Esophagus squamous epithelium (tissue), 5 donors: ENCODE measurements at regions of chr11 and their contacts with region 1.

Region 1: GRCh38 chr11:33362051-33362910 is 105.1 kb downstream of the HIPK3 start:
- DNase-seq: no peak
- H3K4me3 ChIP-seq: no peak overlapping the region
- H3K27ac ChIP-seq: no peak overlapping the region
- H3K4me1 ChIP-seq: peaks cover 0 to 6% (median 0%) of the 10 kb centered on the region in 3 donors
- H3K27me3 ChIP-seq: no peaks in the 10 kb centered on the region
- CTCF ChIP-seq: peak in 5 of 6 experiments; percentile 58 to 80 (median 67)
- POLR2A ChIP-seq: no peak

Region 2: DNA sequence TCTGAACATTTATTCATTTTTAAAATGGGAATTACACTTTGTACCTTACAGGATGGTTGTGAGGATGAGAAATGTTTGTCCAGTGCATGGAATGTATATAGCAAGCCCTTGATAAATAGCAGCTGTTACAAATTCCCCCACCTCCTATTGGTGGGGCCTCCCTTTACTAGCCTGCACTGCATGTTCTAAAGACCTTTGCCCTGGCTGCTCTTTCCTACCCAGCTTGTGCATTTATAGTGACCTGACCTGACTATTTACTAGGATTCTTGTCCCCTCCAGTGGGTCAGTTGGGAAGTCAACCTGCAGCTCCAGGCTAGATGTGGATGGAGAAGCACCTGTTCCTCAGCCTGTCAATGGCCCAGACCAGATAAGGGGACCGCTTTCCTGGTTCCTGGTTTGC is 75.2 kb after region 1 on chr11:
- intact Hi-C with region 1: no loop called
- DNase-seq: no peak
- H3K4me3 ChIP-seq: no peak overlapping the region
- H3K27ac ChIP-seq: no peak overlapping the region
- H3K4me1 ChIP-seq: no peaks in the 10 kb centered on the region
- H3K27me3 ChIP-seq: no peaks in the 10 kb centered on the region
- CTCF ChIP-seq: no peak
- POLR2A ChIP-seq: no peak

Region 3: GRCh38 chr11:33525789-33526188 is 163.5 kb after region 1 on chr11:
- intact Hi-C with region 1: no loop called
- DNase-seq: no peak
- H3K4me3 ChIP-seq: no peak overlapping the region
- H3K27ac ChIP-seq: no peak overlapping the region
- H3K4me1 ChIP-seq: no peaks in the 10 kb centered on the region
- H3K27me3 ChIP-seq: peaks cover 0 to 28% (median 0%) of the 10 kb centered on the region in 4 donors
- CTCF ChIP-seq: no peak
- POLR2A ChIP-seq: no peak

Region 4: GRCh38 chr11:33606762-33607161 is 244.5 kb after region 1 on chr11:
- intact Hi-C with region 1: no loop called
- DNase-seq: no peak
- H3K4me3 ChIP-seq: no peak overlapping the region
- H3K27ac ChIP-seq: no peak overlapping the region
- H3K4me1 ChIP-seq: no peaks in the 10 kb centered on the region
- H3K27me3 ChIP-seq: no peaks in the 10 kb centered on the region
- CTCF ChIP-seq: no peak
- POLR2A ChIP-seq: no peak

Region 5: DNA sequence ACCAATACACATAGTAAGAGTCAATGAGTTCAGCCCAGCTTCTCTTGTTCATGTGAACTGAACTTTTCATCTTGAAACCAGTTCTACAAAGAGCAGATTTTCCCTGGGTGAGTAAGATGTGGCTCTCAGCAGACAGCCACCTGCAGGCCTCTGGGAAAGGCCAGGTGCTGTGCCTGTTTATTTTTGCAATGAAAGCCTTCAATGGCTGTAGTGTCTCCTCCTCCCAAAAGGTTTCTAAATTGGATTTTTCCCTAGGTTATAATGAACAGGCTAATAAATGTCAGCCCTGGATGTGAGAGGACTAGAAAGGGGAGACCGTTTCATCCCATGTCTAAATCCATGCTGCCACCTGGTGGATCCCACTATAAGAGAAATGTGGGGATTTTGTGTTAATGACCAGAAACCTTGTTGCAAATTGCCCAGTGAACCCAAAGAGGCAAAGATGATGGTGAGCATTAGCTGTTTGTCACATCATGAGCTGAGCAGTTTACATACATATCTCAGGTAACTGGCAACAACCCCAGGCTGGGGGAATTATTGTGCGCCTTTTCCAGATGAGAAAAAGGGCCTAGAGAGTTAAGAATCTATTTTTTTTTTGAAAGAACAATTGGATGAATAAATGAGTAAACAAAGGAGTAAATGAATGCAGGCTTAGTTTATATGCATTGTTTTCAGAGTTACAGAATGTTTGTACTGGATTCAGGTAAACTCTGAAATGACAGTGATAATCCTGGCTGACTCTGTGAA is 325.6 kb after region 1 on chr11:
- intact Hi-C with region 1: loop called (anchors 5 kb)
- DNase-seq: no peak
- H3K4me3 ChIP-seq: no peak overlapping the region
- H3K27ac ChIP-seq: peak overlapping the region; percentile 78 to 94 (median 87)
- H3K4me1 ChIP-seq: peaks cover 33 to 58% (median 36%) of the 10 kb centered on the region in 3 donors
- H3K27me3 ChIP-seq: no peaks in the 10 kb centered on the region
- CTCF ChIP-seq: peak; percentile 48 to 84 (median 65)
- POLR2A ChIP-seq: no peak